IMR-90 (cell line): ENCODE measurements at regions of chr4 and their contacts with region 1.

Region 1: GRCh38 chr4:145481164-145481941 is at the start of gene SMAD1:
- DNase-seq: peak; percentile 82
- ATAC-seq: peak; percentile 89
- H3K4me3 ChIP-seq: peak within 1 kb of the TSS; percentile 56
- H3K27ac ChIP-seq: peak within 1 kb of the TSS; percentile 83
- H3K4me1 ChIP-seq: peaks cover 2% of the 10 kb centered on the region; the same call in 1 of the 2 replicates
- H3K27me3 ChIP-seq: no peaks in the 10 kb centered on the region
- CTCF ChIP-seq: no peak
- POLR2A ChIP-seq: peak; percentile 57; the same call in 1 of the 2 replicates
- RAD21 ChIP-seq: no peak
- total RNA-seq, gene SMAD1: 17.6 and 20.8 TPM in 2 replicates

Region 2: DNA sequence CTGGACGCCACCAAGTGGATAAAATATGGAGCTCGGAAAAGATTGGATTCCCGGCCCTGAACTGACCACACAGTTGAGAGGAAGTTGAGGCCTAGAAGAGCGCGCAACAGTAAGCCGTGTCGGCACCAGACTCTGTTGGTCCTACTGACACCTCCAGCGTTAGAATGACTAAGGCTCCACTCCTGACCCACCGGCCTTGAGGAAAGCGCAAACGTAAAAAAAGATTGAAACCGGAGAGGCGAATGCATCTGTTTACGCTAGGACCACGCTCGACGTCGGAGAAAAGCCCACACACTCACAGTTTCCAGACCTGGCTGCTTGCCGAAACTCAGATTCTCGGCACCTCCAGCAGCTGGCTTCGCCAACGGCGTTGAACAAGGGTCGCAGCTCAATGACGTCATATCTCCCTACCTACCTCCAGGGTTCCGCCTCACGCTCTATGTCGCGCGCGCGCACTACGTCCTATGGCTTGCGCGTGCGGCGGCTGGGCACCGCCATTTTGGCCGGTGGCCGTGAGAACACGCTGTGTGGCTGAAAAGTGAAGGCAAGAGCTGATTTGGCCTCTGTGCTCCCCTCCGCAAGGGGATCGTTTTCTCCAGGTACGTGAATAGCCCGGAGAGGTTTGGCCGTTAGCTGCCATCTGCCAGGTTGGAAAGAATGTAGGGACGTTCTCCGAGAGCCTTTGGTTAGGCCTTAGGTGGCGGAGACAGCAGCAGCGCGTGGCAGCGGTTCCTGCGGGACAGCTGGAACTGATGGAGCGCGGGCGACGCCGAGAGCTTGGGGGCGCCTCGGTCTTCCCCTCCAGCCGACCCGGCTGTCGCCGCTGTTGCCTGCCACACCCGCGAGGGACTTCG is 383.3 kb before region 1 on chr4 and contains the starts of genes ABCE1 and ANAPC10:
- CTCF ChIA-PET with region 1: no interaction called
- POLR2A ChIA-PET with region 1: no interaction called
- dilution Hi-C with region 1: no loop called
- in situ Hi-C with region 1: no loop called
- intact Hi-C with region 1: loop called (anchors 10 kb)
- DNase-seq: peak; percentile 99
- ATAC-seq: peak; percentile 95
- H3K4me3 ChIP-seq: peak within 1 kb of the TSS; percentile 60
- H3K27ac ChIP-seq: peak within 1 kb of the TSS; percentile 80
- H3K4me1 ChIP-seq: no peaks in the 10 kb centered on the region
- H3K27me3 ChIP-seq: no peaks in the 10 kb centered on the region
- CTCF ChIP-seq: peak; percentile 49
- POLR2A ChIP-seq: peak; percentile 82
- RAD21 ChIP-seq: peak; percentile 43
- total RNA-seq, gene ABCE1: 212 and 219 TPM in 2 replicates
- total RNA-seq, gene ANAPC10: 22.4 and 25.8 TPM in 2 replicates

Region 3: DNA sequence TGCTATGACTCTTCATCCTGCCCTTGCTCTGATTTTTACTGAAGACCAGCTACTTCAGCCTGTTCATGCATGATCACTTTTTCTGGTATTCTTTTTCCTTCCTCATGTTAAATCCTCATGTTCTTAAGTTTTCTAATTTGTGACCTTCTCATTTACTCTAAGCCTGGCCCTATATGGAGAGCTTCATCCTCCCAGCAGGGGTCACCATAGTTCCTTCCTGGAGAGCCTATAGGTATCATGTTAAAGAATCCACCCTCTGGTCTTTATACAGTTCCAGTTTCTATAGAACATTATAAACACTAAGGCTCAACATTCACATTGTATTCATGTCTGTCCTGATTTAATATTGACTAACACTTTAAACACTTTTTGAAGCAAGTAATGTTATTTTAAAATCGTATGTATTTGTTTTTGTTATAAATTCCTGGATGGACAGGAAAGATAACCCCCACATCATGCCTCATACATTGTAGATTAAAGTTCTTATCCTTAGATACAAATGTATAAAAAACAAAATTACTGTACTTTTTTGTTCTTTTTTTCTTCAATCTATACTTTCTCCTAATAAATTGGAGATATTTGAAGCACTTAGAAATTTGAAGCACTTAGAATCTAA is 247.2 kb before region 1 on chr4:
- CTCF ChIA-PET with region 1: interaction called, 3 read pairs
- POLR2A ChIA-PET with region 1: no interaction called
- dilution Hi-C with region 1: no loop called
- in situ Hi-C with region 1: no loop called
- intact Hi-C with region 1: loop called (anchors 5 kb)
- DNase-seq: peak; percentile 67
- ATAC-seq: peak; percentile 93
- H3K4me3 ChIP-seq: no peak overlapping the region
- H3K27ac ChIP-seq: no peak overlapping the region
- H3K4me1 ChIP-seq: 0 out of 2 replicates have a peak, but pooled peaks cover 1% of the 10 kb centered on the region
- H3K27me3 ChIP-seq: no peaks in the 10 kb centered on the region
- CTCF ChIP-seq: peak; percentile 88
- POLR2A ChIP-seq: no peak
- RAD21 ChIP-seq: peak; percentile 83

Region 4: GRCh38 chr4:145557720-145558119 is 76.4 kb after region 1 on chr4:
- CTCF ChIA-PET with region 1: interaction called, 3 read pairs
- POLR2A ChIA-PET with region 1: no interaction called
- dilution Hi-C with region 1: no loop called
- in situ Hi-C with region 1: no loop called
- intact Hi-C with region 1: loop called (anchors 2 kb)
- DNase-seq: peak; percentile 72
- ATAC-seq: peak; percentile 99
- H3K4me3 ChIP-seq: no peak overlapping the region
- H3K27ac ChIP-seq: no peak overlapping the region
- H3K4me1 ChIP-seq: no peaks in the 10 kb centered on the region
- H3K27me3 ChIP-seq: no peaks in the 10 kb centered on the region
- CTCF ChIP-seq: peak; percentile 99
- POLR2A ChIP-seq: no peak
- RAD21 ChIP-seq: peak; percentile 81

Region 5: DNA sequence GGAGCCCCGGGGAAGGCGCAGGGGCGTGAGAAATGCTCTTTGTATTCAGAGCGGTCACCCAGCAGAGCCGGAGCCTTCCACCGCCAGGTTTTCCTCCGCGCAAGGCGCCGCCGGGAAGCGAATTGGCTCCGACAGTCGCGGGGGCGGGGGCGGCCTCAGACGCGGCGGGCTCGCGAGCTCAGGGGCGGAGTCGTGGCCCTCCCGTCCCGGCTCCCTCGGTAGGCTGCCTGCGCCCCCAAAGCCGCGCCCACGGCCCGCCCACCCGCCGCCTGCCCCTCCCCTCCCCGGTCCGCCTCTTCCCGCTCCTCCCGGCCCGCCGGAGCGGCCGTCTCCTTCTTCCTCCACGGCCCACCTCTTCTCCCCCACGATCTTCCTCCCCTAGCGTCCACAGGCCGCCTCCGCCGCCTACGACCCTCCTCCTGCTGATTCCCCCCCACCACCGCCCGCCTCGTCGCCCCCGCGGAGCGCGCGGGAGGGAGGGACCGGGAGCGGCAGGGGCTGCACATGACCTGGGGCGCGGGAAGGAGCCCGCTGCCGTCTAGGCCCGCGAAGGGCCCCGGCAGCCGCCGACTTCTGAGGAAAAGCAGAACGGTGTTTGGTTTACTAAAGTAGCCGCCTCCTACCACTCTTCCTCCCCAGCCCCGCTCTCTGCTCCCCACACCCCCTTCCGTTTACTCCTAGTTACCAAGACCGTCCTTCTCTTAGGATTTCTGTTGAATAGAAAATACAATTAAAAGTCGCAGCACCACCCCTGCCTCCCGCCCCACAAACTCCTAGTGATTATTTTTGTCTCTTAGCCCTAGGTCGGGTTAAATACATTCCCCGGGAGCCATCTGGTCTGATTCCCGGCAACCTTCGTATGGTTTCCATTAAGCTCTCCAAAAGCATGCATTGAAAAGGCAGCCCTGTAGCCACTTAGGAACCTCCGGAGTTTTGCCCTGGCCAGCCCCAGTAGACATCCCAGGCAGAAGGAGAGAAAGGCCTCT is 251.8 kb after region 1 on chr4:
- CTCF ChIA-PET with region 1: no interaction called
- POLR2A ChIA-PET with region 1: no interaction called
- dilution Hi-C with region 1: no loop called
- in situ Hi-C with region 1: no loop called
- intact Hi-C with region 1: loop called (anchors 10 kb)
- DNase-seq: peak; percentile 89
- ATAC-seq: peak; percentile 80
- H3K4me3 ChIP-seq: peak overlapping the region; percentile 57
- H3K27ac ChIP-seq: peak overlapping the region; percentile 92
- H3K4me1 ChIP-seq: peaks cover 28% of the 10 kb centered on the region
- H3K27me3 ChIP-seq: no peaks in the 10 kb centered on the region
- CTCF ChIP-seq: no peak
- POLR2A ChIP-seq: peak; percentile 75
- RAD21 ChIP-seq: no peak